Right ventricle myocardium superior (tissue), 1 donor: ENCODE measurements at regions of chr14 and their contacts with region 1.

Region 1: GRCh38 chr14:67280506-67280905 is 39.3 kb downstream of the PALS1 start:
- DNase-seq: no peak
- ATAC-seq: no peak

Region 2: DNA sequence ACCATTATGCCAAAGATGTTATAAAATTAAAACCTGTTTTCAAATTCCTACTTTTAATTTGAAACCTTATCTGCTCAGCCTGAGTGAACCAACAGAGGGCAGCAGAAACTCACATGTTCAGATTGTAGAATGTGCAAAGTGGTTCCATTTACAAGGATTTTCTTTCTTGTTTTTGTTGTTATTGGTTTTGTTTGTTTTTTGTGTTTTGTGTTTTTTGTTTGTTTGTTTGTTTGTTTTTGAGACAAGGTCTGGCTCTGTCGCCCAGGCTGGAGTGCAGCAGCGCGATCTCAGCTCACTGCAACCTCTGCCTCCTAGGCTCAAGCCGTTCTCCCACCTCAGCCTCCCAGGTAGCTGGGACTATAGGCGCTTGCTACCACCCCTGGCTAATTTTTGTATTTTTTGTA is 114.1 kb before region 1 on chr14:
- intact Hi-C with region 1: loop called (anchors 5 kb)
- DNase-seq: no peak
- ATAC-seq: no peak